K562 (cell line): ENCODE measurements at regions of chr1 and their contacts with region 1.

Region 1: GRCh38 chr1:23867953-23868556 is at the start of gene FUCA1:
- DNase-seq: peak; percentile 98 to 99 (median 99)
- ATAC-seq: peak; percentile 98
- H3K4me3 ChIP-seq: peak within 1 kb of the TSS; percentile 72
- H3K27ac ChIP-seq: peak within 1 kb of the TSS; percentile 74
- H3K4me1 ChIP-seq: peaks cover 14 to 25% of the 10 kb centered on the region in 2 experiments
- H3K27me3 ChIP-seq: no peaks in the 10 kb centered on the region
- CTCF ChIP-seq: peak; percentile 92 to 99 (median 97)
- EP300 ChIP-seq: peak; percentile 25; the same call in 1 of the 2 replicates
- POLR2A ChIP-seq: peak; percentile 66
- RAD21 ChIP-seq: peak; percentile 72 to 78
- polyA plus RNA-seq, gene FUCA1: 7.0 to 8.2 TPM

Region 2: DNA sequence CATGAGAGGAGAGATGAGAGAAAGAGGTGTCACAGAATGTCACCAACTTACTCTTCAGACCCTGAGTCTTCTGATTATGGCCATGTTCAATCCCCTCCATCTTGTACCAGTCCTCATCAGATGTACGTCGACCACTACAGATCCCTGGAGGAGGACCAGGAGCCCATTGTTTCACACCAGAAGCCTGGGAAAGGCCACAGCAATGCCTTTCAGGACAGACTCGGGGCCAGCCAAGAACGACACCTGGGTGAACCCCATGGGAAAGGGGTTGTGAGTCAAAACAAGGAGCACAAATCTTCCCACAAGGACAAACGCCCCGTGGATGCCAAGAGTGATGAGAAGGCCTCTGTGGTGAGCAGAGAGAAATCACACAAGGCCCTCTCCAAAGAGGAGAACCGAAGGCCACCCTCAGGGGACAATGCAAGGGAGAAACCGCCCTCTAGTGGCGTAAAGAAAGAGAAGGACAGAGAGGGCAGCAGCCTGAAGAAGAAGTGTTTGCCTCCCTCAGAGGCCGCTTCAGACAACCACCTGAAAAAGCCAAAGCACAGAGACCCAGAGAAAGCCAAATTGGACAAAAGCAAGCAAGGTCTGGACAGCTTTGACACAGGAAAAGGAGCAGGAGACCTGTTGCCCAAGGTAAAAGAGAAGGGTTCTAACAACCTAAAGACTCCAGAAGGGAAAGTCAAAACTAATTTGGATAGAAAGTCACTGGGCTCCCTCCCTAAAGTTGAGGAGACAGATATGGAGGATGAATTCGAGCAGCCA is 116.8 kb before region 1 on chr1:
- CTCF ChIA-PET with region 1: no interaction called
- POLR2A ChIA-PET with region 1: no interaction called
- in situ Hi-C with region 1: no loop called
- intact Hi-C with region 1: no loop called
- DNase-seq: peak; percentile 63 to 77 (median 70)
- ATAC-seq: peak; percentile 95
- H3K4me3 ChIP-seq: no peak overlapping the region
- H3K27ac ChIP-seq: no peak overlapping the region
- H3K4me1 ChIP-seq: peaks cover 0 to 11% of the 10 kb centered on the region in 2 experiments; a peak in 2 of 5 replicates
- H3K27me3 ChIP-seq: no peaks in the 10 kb centered on the region
- CTCF ChIP-seq: peak; percentile 79 to 90 (median 87)
- EP300 ChIP-seq: no peak
- POLR2A ChIP-seq: no peak
- RAD21 ChIP-seq: peak; percentile 47 to 79; a peak in 3 of 4 replicates

Region 3: DNA sequence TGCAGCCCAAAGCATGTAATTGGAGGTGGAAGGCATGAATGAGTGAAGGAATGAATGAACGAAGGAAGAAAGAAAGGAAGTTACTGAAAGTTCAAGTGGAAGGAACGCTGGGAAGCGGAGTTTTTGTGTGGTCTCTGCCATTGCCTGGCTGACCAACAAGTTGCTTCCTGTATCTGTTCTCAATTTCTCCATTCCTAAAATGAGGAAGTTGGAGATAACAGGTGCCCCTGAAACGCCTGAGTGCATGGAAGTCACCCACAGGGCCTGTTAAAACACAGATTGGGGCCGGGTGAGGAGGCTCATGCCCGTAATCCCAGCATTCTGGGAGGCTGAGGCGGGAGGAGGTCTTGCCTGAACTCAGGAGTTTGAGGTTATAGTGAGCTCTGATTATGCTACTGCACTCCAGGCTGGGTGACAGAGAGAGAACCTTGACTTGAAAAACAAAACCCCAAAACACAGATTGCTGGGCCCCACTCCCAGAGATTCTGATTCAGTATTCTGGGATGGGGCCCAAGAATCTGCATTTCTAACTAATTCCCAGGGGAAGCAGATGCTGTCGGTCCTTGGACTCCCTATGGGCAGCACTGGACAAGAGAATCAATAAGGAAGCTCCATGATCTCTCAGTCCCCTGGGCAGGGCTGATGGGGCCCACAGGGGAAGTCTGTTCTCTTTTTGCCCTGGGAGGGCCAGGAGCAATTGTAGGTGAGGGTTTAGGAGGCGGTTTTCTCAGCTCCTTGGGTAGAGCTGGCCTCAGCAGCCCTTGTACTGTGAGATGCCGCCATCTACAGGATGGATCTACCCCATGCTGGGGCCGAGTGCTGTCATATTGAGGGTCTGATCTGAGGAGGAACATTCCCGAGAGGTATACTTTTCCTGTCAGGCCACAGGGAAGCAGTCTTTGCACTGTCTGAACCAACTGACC is 48.4 kb after region 1 on chr1:
- CTCF ChIA-PET with region 1: interaction called, 5 read pairs
- POLR2A ChIA-PET with region 1: no interaction called
- in situ Hi-C with region 1: no loop called
- intact Hi-C with region 1: loop called (anchors 5 kb)
- DNase-seq: peak; percentile 84 to 90 (median 86)
- ATAC-seq: peak; percentile 93
- H3K4me3 ChIP-seq: no peak overlapping the region
- H3K27ac ChIP-seq: peak overlapping the region; percentile 9; the same call in 1 of the 3 replicates
- H3K4me1 ChIP-seq: peaks cover 30 to 48% of the 10 kb centered on the region in 2 experiments
- H3K27me3 ChIP-seq: no peaks in the 10 kb centered on the region
- CTCF ChIP-seq: peak; percentile 90 to 96 (median 95)
- EP300 ChIP-seq: no peak
- POLR2A ChIP-seq: no peak
- RAD21 ChIP-seq: peak; percentile 91 to 96